ENCODE measurements at regions of chr10 and their contacts with region 1.

Region 1: GRCh38 chr10:71554671-71555070 is 158.0 kb downstream of the CDH23 start:
- DNase-seq: no peak
- H3K4me3 ChIP-seq: no peak overlapping the region
- CTCF ChIP-seq: no peak

Region 2: GRCh38 chr10:71512775-71513539 is 41.7 kb before region 1 on chr10:
- in situ Hi-C with region 1: loop called (anchors 5 kb)
- DNase-seq: no peak
- H3K4me3 ChIP-seq: no peak overlapping the region
- CTCF ChIP-seq: no peak

Region 3: GRCh38 chr10:71597821-71598498 is 43.3 kb after region 1 on chr10:
- in situ Hi-C with region 1: loop called (anchors 5 kb)
- DNase-seq: no peak
- H3K4me3 ChIP-seq: no peak overlapping the region
- CTCF ChIP-seq: no peak